Esophagus squamous epithelium (tissue), 5 donors: ENCODE measurements at regions of chr12 and their contacts with region 1.

Region 1: GRCh38 chr12:101697197-101697929 is at the start of gene CHPT1:
- DNase-seq: no peak
- H3K4me3 ChIP-seq: peak within 1 kb of the TSS; percentile 58 to 82 (median 72)
- H3K27ac ChIP-seq: peak within 1 kb of the TSS; percentile 87 to 95 (median 91)
- H3K4me1 ChIP-seq: peaks cover 8 to 65% (median 13%) of the 10 kb centered on the region in 3 donors
- H3K27me3 ChIP-seq: no peaks in the 10 kb centered on the region
- CTCF ChIP-seq: no peak
- POLR2A ChIP-seq: peak in 2 of 4 donors; percentile 48 to 51
- total RNA-seq, gene CHPT1: 12.7 to 53.6 (median 27.0) TPM

Region 2: DNA sequence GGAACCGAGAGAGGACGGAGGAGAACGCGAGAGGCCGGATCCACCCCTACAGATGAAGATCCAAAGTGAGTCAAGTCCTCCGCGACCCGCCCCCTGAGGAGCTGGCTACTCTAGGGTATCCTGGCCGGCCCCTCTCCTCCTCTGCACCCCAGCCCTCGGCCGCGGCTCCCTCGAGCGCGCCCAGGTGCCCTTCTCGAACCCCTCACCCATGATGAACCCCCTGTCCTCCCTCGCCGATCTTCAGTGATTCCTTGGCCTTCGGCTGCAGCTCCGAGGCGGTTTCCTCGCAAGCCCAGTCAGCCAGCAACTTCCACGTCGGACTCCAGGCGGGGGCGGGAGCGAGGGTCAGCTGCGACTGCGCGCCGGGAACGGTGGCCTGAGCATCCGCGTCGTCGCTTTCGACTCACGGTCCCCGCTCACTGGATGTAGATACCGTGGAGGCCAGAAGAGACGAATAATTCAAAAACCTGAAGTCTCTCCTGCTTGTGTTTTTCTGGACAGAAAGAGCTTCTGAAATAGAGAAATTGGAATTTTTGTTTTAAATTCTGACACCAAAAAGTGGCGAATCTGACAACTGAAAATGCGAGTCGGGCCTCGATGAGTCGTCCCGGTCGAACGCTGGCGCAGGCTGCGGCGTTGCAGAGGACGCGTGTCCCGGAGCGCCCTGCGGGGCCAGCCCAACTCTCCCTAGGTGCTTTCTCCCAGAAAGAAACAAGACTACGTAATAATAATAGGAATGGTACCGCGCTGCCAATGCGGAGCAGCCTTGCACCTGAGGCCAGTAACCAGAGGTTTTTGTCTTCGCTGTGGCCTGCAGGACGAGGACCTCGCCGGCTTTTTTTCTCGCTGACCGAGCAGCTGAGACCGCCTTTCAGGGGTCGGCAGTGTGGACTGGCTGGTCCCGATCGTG is 289.7 kb before region 1 on chr12 and contains the start of gene ARL1:
- intact Hi-C with region 1: loop called (anchors 5 kb)
- DNase-seq: peak; percentile 19
- H3K4me3 ChIP-seq: peak within 1 kb of the TSS; percentile 77 to 95 (median 80)
- H3K27ac ChIP-seq: peak within 1 kb of the TSS; percentile 90 to 97 (median 94)
- H3K4me1 ChIP-seq: peaks cover 5 to 44% (median 18%) of the 10 kb centered on the region in 3 donors
- H3K27me3 ChIP-seq: no peaks in the 10 kb centered on the region
- CTCF ChIP-seq: no peak
- POLR2A ChIP-seq: peak in 1 of 4 donors; percentile 61
- total RNA-seq, gene ARL1: 43.9 to 62.8 (median 56.2) TPM